H1 (cell line): ENCODE measurements at regions of chr1 and their contacts with region 1.

Region 1: DNA sequence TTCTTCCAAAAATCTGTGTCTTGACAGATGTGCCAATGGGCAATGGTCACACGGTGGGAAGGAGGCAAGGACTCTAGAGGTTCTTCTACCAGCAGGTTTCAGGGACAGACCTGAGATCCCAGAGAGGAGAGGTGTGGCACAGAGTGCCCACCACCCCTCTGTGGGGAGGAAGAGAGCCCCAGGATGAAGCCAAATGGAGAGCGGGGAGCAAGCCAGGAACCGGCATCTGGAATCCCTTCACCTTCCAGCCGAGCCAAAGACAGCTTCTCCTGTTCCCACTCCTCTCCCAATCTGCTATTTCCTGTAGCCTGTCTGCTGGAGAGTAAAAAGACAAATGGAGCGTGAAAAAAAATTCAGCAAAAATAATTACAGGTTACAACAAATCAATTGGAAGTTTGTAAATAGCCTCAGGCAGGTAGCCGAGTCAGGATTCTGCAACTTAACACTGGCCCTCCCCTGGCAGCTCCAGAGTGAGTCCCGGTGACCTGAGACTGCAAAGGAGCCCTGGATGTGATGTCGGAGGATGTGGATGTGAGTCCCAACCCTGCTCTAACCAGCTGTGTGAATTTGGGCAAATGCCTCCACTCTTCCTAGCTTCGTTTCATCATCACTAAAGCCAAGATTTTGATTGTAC is 45.4 kb upstream of the LRRN2 start:
- DNase-seq: peak in 1 of 2 experiments; percentile 41
- H3K4me3 ChIP-seq: no peak overlapping the region
- H3K27ac ChIP-seq: no peak overlapping the region
- H3K4me1 ChIP-seq: peaks cover 0 to 6% (median 2%) of the 10 kb centered on the region in 4 experiments; a peak in 3 of 7 replicates
- H3K27me3 ChIP-seq: no peaks in the 10 kb centered on the region; a peak in 1 of 7 replicates
- CTCF ChIP-seq: no peak
- EP300 ChIP-seq: no peak
- POLR2A ChIP-seq: no peak
- RAD21 ChIP-seq: no peak

Region 2: DNA sequence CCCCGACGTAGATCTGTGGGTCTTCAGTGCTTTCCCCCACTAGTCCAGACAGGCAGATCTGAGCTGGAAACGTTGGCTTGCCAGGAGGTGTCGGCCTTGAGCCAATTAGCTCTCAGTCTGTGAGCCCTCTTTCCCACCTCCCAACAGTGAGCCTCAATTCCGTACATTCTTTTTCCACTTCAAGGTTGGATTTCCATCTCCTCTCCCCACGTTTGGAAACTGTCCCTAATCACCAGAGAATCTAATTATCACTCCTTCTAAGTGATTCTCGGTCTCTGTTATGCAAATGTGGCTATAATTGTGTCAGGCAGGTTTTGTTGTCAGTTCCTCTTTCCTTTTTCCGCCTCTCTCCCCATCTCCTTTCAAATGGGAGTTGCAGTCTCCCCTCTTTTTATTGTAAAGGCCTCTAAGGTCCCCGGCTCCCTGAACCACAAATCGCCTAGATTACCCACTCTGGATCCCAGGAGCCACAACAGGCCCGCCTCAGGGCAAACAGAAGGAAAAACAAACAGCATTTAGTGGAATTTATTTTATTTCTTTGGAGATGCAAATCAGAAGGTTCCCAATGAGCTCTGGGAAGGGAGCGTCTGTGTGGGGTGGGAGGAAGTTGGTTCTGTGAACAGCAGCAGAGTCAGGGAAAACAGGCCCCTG is 16.0 kb before region 1 on chr1:
- CTCF ChIA-PET with region 1: interaction called, 18 read pairs
- POLR2A ChIA-PET with region 1: no interaction called
- DNase-seq: no peak
- H3K4me3 ChIP-seq: peak overlapping the region in 1 of 4 experiments; percentile 38; a peak in 2 of 8 replicates
- H3K27ac ChIP-seq: no peak overlapping the region
- H3K4me1 ChIP-seq: peaks cover 12 to 29% (median 20%) of the 10 kb centered on the region in 4 experiments
- H3K27me3 ChIP-seq: peaks cover 22 to 54% (median 46%) of the 10 kb centered on the region in 4 experiments
- CTCF ChIP-seq: peak; percentile 55 to 72 (median 65)
- EP300 ChIP-seq: no peak
- POLR2A ChIP-seq: no peak
- RAD21 ChIP-seq: peak; percentile 69 to 74